PC-9 (cell line): ENCODE measurements at regions of chr3 and their contacts with region 1.

Region 1: DNA sequence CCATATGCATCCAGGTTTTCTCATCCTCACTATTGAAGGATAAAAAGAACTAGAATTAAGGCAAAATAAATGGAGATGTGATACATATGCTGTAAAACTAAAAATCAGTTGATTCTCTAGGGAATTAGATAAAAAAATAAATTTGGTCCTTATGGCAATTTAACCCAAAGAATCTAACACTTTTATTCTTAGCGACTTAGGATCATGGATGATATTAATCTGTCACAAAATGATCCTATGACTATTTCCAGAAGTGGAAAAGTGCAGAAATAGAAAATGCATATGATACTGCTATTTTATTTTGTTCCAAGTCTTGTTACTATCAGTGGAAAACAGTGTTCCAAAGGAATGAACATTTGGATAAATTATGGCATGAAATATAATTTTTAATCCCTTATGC is 746.3 kb downstream of the ROBO2 start:
- DNase-seq: no peak
- H3K4me3 ChIP-seq: no peak overlapping the region
- H3K27ac ChIP-seq: no peak overlapping the region
- H3K4me1 ChIP-seq: no peaks in the 10 kb centered on the region
- H3K27me3 ChIP-seq: no peaks in the 10 kb centered on the region
- CTCF ChIP-seq: no peak

Region 2: DNA sequence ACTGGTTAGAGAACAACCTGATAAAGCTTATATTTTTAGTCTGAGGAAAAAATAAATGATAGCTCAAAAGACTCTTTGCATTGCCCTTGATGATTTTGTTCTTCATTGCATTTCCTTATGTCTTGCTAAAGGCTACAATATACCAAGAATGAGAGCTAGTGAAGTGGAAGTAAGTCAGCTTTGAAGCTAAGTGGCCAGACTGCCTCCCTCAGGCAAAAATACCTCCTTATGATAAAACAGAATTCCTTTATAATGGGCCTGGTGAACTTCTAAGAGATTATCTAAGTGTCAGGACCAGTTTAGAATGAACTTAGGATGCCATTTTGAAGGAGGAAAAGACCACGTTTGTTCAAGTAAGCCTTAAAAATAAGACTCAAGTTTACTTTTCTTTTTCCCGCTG is 67.9 kb before region 1 on chr3:
- CTCF ChIA-PET with region 1: no interaction called
- POLR2A ChIA-PET with region 1: no interaction called
- intact Hi-C with region 1: loop called (anchors 2 kb)
- DNase-seq: no peak
- H3K4me3 ChIP-seq: no peak overlapping the region
- H3K27ac ChIP-seq: no peak overlapping the region
- H3K4me1 ChIP-seq: no peaks in the 10 kb centered on the region
- H3K27me3 ChIP-seq: no peaks in the 10 kb centered on the region
- CTCF ChIP-seq: no peak